Dorsolateral prefrontal cortex (tissue), 120 donors: ENCODE measurements at regions of chr4 and their contacts with region 1.

Region 1: DNA sequence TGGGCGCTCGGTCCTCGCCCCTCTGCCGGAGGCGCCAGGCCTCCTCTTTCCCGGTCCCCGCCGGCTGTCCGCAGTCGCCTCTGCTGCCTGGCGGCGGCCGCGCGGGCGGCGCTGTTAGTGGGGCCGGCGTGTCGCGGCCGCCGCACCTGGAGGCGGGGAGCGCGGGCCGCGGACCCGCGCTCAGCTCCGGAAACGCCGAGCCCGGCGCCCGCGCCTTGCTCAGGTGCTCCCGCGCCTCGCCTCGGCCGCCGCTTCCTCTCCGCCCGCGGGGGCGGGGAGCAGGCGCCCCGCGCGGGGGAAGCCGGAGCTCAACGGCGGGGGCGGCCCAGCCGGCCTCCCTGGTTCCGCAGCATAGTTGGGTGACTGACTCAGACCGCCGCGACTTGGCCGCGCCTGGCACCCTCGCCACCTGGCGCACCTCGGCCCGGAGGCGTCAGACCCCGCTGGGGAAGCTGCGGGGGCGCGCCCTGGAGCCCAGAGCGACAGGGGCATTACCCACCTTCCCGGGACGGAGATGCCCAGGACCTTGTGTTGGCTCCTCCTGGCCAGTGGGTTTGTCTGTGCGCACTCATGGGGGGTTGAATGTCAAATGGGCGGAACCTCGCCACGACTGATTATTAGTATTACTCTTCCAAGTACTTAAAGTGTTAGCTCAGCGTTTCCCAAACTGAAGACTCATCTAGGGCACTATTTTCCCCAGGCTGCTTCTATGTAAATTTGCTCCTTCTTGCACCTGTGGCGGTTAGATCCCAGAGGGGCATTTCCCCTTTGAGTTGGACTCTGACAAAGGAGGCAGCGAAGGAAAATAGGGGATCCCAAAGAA is at the start of gene ARAP2:
- DNase-seq: peak in 8 of 10 donors; percentile 30 to 79 (median 46)
- H3K4me3 ChIP-seq: peak within 1 kb of the TSS; percentile 63 to 93 (median 81)
- H3K27ac ChIP-seq: peak within 1 kb of the TSS; percentile 86 to 99 (median 97)
- H3K27me3 ChIP-seq: no peaks in the 10 kb centered on the region
- CTCF ChIP-seq: peak in 12 of 56 donors; percentile 0 to 39 (median 21)
- total RNA-seq, gene ARAP2: 87.3 to 271 (median 162) TPM

Region 2: GRCh38 chr4:36280555-36280954 is 36.1 kb after region 1 on chr4:
- intact Hi-C with region 1: loop called in 1 of 2 experiments (anchors 5 kb)
- DNase-seq: peak in 5 of 10 donors; percentile 34 to 51 (median 44)
- H3K4me3 ChIP-seq: peak overlapping the region in 53 of 59 donors; percentile 0 to 61 (median 34)
- H3K27ac ChIP-seq: peak overlapping the region; percentile 16 to 99 (median 85)
- H3K27me3 ChIP-seq: no peaks in the 10 kb centered on the region
- CTCF ChIP-seq: peak in 33 of 56 donors; percentile 8 to 52 (median 25)

Region 3: DNA sequence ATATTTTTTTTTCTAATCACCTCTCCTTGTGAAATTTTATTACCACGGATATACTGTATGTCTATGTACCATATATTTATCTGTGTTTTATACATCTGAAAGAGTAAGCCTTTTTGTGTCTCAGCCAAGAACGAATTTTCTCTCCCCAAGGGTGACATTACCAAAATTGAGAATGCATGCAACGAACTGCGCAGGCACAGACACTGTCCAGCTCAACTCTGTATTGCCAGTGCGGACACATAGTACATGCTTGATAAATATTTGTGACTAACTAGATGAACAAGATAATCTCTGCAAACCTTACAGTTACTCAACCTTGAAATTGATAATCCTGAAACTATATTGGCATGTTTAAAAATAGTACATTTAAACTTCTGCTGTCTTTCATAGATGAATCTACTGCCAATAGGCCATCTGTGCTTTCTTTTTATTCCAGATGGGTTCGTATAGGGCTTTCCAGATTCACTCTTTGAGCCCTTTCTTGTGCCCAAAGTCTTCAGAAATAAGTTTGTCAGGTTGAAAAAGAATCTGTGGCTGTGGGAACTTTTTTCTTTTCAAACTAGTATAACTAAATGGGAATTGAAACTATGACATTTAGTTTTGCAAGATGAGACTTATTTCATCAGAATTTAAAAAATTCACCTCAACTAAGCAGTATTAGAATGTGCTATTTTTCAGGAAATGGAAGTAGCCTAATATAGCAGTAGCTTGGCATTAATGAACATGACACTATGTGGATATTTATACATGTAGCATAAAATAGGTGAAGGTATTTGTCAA is 75.8 kb after region 1 on chr4:
- intact Hi-C with region 1: no loop called
- DNase-seq: no peak
- H3K4me3 ChIP-seq: no peak overlapping the region
- H3K27ac ChIP-seq: peak overlapping the region in 4 of 59 donors; percentile 6 to 39 (median 8)
- H3K27me3 ChIP-seq: no peaks in the 10 kb centered on the region
- CTCF ChIP-seq: no peak